Thyroid gland (tissue), 4 donors: ENCODE measurements at regions of chr1 and their contacts with region 1.

Region 1: DNA sequence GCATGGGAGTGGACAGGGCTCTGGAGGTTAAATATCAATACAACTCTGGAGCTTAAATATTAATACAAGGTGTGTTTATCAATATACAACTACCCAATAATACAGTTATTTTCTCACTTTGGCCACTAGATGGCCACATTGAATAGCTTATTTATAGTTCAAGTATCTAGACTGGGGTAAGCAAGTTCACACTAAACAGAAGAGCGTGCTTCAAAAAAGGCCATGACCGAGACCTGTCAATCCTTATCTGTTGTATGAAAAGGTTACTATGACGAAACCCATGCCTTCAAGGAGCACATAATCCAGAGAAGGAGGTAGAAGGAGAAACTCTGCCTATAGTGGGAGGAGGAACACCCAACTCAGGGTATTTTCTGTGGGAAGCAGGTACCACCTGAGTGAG is 29.1 kb downstream of the CHML start:
- DNase-seq: no peak
- H3K4me3 ChIP-seq: no peak overlapping the region
- H3K27ac ChIP-seq: no peak overlapping the region
- H3K4me1 ChIP-seq: no peaks in the 10 kb centered on the region
- H3K27me3 ChIP-seq: no peaks in the 10 kb centered on the region
- CTCF ChIP-seq: peak in 5 of 6 experiments; percentile 27 to 75 (median 57)
- POLR2A ChIP-seq: no peak

Region 2: GRCh38 chr1:241716915-241717656 is 106.0 kb after region 1 on chr1:
- intact Hi-C with region 1: no loop called
- DNase-seq: no peak
- H3K4me3 ChIP-seq: no peak overlapping the region
- H3K27ac ChIP-seq: no peak overlapping the region
- H3K4me1 ChIP-seq: no peaks in the 10 kb centered on the region
- H3K27me3 ChIP-seq: no peaks in the 10 kb centered on the region
- CTCF ChIP-seq: no peak
- POLR2A ChIP-seq: no peak

Region 3: GRCh38 chr1:241762713-241763339 is 151.8 kb after region 1 on chr1:
- intact Hi-C with region 1: no loop called
- DNase-seq: no peak
- H3K4me3 ChIP-seq: no peak overlapping the region
- H3K27ac ChIP-seq: no peak overlapping the region
- H3K4me1 ChIP-seq: no peaks in the 10 kb centered on the region
- H3K27me3 ChIP-seq: no peaks in the 10 kb centered on the region
- CTCF ChIP-seq: no peak
- POLR2A ChIP-seq: no peak

Region 4: GRCh38 chr1:241834733-241835377 is 223.8 kb after region 1 on chr1:
- intact Hi-C with region 1: loop called (anchors 10 kb)
- DNase-seq: no peak
- H3K4me3 ChIP-seq: no peak overlapping the region
- H3K27ac ChIP-seq: no peak overlapping the region
- H3K4me1 ChIP-seq: no peaks in the 10 kb centered on the region
- H3K27me3 ChIP-seq: no peaks in the 10 kb centered on the region
- CTCF ChIP-seq: peak in 4 of 6 experiments; percentile 19 to 58 (median 49)
- POLR2A ChIP-seq: no peak